Ovary (tissue), 10 donors: ENCODE measurements at regions of chr5 and their contacts with region 1.

Region 1: DNA sequence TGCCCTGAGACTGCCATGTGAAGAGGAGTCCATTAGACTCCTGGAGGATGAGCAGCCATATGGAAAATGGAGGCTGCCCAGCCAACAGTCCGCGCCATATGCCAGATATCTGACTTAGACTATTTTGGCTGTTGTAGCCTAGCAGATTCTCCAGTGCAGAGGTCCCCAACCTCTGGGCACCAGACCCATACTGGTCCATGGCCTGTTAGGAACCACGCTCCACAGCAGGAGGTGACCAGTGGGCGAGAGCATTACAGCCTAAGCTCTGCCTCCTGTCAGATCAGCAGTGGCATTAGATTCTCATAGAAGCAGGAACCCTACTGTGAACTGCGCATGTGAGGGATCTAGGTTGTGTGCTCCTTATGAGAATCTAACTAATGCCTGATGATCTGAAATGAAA is 851.9 kb downstream of the NR2F1-AS1 start:
- DNase-seq: no peak
- H3K4me3 ChIP-seq: no peak overlapping the region
- H3K27ac ChIP-seq: no peak overlapping the region
- H3K4me1 ChIP-seq: no peaks in the 10 kb centered on the region
- H3K27me3 ChIP-seq: no peaks in the 10 kb centered on the region
- CTCF ChIP-seq: no peak
- EP300 ChIP-seq: no peak
- POLR2A ChIP-seq: no peak

Region 2: GRCh38 chr5:92518318-92518904 is 210.7 kb before region 1 on chr5:
- intact Hi-C with region 1: no loop called
- DNase-seq: no peak
- H3K4me3 ChIP-seq: no peak overlapping the region
- H3K27ac ChIP-seq: no peak overlapping the region
- H3K4me1 ChIP-seq: peaks cover 2% of the 10 kb centered on the region
- H3K27me3 ChIP-seq: no peaks in the 10 kb centered on the region
- CTCF ChIP-seq: peak in 1 of 3 donors; percentile 12
- EP300 ChIP-seq: no peak
- POLR2A ChIP-seq: no peak

Region 3: DNA sequence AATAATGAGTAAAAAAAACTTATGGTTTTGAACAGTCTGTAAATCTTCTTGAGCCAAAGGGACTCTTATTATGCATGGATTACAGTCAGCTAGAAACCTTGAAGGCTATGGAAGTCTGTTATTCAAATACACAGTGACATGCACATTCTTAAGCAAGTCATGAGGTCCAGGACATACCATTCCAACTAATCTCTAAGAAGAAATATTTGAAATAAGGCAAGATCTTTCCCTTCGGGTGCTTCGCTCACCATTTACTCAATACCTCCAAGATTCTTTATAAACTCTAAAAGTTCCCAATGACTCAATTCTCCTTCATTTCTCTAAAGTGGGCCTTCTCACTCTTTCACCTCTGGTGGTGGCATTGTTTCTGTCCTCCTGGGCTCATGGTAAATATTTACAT is 40.9 kb after region 1 on chr5:
- intact Hi-C with region 1: no loop called
- DNase-seq: no peak
- H3K4me3 ChIP-seq: no peak overlapping the region
- H3K27ac ChIP-seq: no peak overlapping the region
- H3K4me1 ChIP-seq: no peaks in the 10 kb centered on the region
- H3K27me3 ChIP-seq: no peaks in the 10 kb centered on the region
- CTCF ChIP-seq: no peak
- EP300 ChIP-seq: no peak
- POLR2A ChIP-seq: no peak

Region 4: DNA sequence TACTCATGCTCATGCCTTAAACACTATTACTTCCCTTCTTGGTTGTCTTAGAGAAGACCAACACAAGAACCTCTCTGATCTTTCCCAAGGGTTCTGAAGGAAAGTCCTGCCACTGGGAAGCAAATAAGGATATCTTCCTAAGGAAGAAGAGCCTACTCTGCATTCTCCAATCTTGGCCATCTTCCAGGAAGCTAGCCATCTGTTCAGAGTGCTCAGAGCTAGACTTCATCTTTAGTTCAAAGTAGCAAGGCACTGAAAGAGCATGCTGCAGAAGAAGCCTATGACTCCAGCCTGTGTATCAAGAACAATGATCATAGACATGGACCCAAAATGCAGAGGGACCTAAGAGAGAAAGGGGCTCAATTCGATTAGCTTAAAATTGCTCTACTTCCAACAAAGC is 1774.6 kb after region 1 on chr5:
- intact Hi-C with region 1: loop called in 1 of 4 experiments (anchors 5 kb)
- DNase-seq: no peak
- H3K4me3 ChIP-seq: no peak overlapping the region
- H3K27ac ChIP-seq: no peak overlapping the region
- H3K4me1 ChIP-seq: no peaks in the 10 kb centered on the region
- H3K27me3 ChIP-seq: no peaks in the 10 kb centered on the region
- CTCF ChIP-seq: no peak
- EP300 ChIP-seq: no peak
- POLR2A ChIP-seq: no peak